Upper lobe of right lung (tissue), 1 donor: ENCODE measurements at regions of chr22 and their contacts with region 1.

Region 1: DNA sequence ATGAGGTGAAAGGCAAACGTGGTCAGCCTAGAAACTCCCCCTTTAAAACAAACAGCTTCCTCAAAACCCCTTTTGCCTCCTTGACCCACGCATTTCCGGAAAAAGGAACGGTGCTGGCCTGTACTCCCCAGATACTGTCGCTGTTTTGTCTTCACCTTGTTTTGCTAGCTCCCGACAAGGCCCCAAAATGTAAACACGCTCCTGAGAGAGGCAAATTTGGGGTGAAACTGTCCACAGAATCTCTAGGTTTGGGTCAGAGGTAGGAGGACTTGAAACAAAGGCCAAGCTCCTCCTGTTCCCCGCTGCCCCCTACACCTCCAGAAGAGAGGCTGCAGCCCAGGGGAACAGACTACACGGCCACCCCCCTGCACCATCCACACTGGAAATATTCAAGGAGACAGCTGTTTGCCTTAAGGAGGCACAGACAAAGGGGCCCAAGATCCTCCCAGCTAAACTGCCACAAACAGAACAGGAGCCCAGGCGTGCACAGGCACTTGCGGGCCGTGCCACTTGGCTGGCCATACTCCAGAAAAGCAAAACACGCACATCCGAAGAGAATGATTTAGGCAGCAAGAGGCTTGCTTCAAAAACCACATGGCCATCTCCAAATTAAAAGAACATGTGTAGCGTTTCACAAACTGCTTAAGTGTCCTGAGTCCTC is 160.5 kb upstream of the GRK3 start:
- DNase-seq: no peak
- ATAC-seq: no peak
- H3K4me3 ChIP-seq: peak overlapping the region; percentile 71
- H3K27ac ChIP-seq: peak overlapping the region; percentile 66
- H3K4me1 ChIP-seq: peaks cover 41% of the 10 kb centered on the region
- H3K27me3 ChIP-seq: no peaks in the 10 kb centered on the region
- CTCF ChIP-seq: no peak

Region 2: DNA sequence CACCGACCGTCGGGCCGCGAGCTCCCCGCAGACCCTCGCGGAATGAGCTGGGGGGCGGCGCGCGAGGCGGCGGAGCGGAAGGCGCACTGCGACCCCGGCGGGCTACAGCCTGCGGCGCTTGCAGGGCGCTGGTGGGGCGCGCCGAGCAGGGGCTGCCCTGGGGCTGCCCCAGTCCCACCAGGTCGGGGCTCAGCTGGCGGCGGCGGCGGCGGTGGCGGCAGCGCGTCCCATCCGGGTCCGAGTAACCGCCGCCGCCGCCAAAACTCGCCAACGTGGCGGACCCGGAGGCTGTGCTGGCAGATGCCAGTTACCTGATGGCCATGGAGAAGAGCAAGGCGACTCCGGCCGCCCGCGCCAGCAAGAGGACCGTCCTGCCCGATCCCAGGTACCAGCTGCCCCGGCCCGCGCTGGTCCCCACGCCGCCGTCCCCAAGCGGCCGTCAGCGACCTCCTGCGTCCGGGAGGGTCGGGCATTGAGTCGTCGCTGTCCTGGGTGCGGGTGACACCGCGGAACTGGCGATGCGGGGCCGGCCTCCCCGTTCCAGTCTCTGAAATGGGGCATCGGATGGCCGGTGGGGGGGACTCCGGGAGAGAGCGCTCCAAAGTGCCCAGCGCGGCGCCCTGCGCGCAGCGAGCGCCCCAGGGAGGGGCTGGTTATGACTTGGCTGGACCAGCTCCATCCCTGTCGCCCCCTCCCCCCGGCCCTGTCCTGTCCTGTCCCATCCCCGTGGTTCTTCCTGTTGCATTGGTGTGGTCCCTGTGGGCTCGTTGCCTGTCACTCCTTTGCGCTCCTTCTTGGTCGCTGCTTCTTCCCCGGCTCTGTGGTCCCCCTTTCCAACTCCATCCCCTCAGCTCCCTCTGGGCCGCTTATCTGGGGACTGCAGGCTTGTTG is 121.0 kb before region 1 on chr22:
- intact Hi-C with region 1: no loop called
- DNase-seq: no peak
- ATAC-seq: no peak
- H3K4me3 ChIP-seq: no peak overlapping the region
- H3K27ac ChIP-seq: no peak overlapping the region
- H3K4me1 ChIP-seq: no peaks in the 10 kb centered on the region
- H3K27me3 ChIP-seq: peaks cover 41% of the 10 kb centered on the region
- CTCF ChIP-seq: no peak

Region 3: DNA sequence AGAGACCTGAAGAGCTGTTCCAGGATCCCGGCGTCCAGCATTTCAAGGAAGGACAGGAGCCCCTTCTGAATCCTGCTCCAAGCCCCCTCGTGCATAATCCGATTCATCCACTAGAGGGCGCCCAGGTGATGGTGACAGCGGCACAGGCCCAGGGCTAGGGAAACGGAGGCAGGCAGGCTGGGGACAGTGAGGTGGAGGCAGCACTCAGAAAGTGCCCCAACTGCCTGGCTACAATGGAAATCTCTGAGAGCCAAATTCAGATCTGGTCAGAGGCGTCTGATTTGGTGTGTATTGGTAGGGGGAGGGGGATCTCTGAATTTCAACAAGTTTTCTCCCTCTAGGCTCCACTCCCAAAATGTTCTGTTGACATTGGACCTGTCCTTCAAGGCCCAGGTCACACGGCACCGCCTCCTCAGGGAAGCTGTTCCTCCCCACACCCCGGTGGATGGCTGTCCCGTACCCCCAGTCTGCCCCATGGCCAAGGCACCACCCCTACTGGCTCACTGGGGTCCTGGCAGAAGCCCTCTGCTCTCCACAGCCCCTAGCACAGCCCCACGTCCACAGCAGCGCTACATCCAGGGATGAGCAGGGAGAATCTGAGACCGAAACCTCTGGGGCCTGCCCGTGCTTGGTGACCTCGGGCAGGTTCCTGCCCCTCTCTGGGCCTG is 41.6 kb before region 1 on chr22:
- intact Hi-C with region 1: loop called (anchors 2 kb)
- DNase-seq: peak; percentile 78
- ATAC-seq: peak; percentile 66
- H3K4me3 ChIP-seq: no peak overlapping the region
- H3K27ac ChIP-seq: no peak overlapping the region
- H3K4me1 ChIP-seq: peaks cover 10% of the 10 kb centered on the region
- H3K27me3 ChIP-seq: no peaks in the 10 kb centered on the region
- CTCF ChIP-seq: peak; percentile 88

Region 4: DNA sequence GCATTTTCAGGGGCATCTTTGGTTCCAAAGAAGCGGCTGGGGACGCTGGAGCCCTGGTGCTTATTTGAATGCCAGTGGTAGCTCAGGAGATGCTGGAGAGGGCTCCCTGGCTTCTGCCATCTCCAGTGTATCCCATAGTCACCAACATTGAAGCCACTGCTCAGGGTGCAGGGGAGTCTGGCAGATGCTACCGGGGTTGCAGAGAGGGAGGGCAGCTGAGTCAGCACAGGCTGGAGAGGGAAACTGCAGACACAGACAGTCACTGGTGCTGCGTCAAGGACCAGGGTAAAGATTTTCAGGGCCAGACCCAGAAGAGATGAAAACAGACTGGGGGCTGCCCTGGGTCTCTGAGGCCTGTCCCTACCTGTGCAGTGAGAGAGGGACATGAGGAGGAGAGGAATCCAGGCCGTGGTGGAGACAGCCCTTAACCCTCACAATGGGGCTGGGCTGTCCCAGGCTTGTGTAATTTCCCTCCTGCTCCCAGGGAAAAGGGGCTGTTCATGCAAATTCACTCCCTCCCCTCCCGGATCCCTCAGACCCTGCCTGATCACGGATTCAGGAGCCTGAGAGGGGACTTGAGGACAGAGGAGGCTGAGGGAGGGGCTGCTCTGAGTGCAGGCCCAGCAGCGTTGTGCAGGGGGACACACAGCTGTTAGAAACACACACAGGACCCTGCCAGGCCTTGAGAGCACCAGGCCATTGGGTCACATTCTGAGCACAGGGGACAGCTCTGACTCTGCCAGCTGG is 33.6 kb after region 1 on chr22:
- intact Hi-C with region 1: no loop called
- DNase-seq: no peak
- ATAC-seq: no peak
- H3K4me3 ChIP-seq: no peak overlapping the region
- H3K27ac ChIP-seq: no peak overlapping the region
- H3K4me1 ChIP-seq: no peaks in the 10 kb centered on the region
- H3K27me3 ChIP-seq: no peaks in the 10 kb centered on the region
- CTCF ChIP-seq: no peak